CD4-positive, alpha-beta T cell (primary cell): ENCODE measurements at regions of chr10 and their contacts with region 1.

Region 1: DNA sequence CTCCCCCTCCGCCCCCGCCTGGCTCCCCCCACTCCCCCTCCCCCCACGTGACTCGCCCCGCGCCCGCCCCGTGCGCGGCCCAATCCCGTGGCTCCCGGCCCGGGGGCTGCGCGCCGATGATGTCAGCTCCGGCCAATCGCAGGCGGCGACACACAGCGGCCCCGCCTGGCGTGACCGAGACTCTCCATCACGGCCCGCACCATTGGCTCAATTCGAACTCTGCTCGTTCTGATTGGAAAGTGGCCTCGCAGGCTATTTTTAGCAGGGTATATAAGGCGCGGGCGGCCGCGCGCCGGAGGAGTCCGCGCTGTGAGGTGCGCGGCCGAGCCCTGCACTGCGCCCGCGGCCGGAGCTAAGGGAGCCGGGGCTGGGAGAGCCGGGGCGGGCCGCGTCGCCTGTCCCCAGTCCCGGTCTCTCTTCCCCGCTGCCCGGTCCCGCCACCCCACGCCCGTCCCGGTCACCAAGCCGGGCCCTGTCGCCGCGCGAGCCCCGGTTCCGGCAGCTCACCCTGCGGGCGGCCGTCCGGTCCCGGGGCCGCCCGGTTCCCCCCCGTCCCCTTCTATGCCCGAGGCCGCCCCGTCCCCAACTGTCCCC is 345 bp upstream of the KLF6 start:
- DNase-seq: peak; percentile 99 to 100 (median 99)
- ATAC-seq: peak; percentile 71
- H3K4me3 ChIP-seq: peak overlapping the region; percentile 80
- H3K4me3 Mint-ChIP-seq: peak overlapping the region; percentile 98
- H3K27ac ChIP-seq: peak overlapping the region; percentile 99 to 100
- H3K27ac Mint-ChIP-seq: peak overlapping the region; percentile 97
- H3K4me1 ChIP-seq: peaks cover 38% of the 10 kb centered on the region
- H3K4me1 Mint-ChIP-seq: peaks cover 44% of the 10 kb centered on the region
- H3K27me3 ChIP-seq: no peaks in the 10 kb centered on the region
- H3K27me3 Mint-ChIP-seq: no peaks in the 10 kb centered on the region
- CTCF ChIP-seq: no peak

Region 2: DNA sequence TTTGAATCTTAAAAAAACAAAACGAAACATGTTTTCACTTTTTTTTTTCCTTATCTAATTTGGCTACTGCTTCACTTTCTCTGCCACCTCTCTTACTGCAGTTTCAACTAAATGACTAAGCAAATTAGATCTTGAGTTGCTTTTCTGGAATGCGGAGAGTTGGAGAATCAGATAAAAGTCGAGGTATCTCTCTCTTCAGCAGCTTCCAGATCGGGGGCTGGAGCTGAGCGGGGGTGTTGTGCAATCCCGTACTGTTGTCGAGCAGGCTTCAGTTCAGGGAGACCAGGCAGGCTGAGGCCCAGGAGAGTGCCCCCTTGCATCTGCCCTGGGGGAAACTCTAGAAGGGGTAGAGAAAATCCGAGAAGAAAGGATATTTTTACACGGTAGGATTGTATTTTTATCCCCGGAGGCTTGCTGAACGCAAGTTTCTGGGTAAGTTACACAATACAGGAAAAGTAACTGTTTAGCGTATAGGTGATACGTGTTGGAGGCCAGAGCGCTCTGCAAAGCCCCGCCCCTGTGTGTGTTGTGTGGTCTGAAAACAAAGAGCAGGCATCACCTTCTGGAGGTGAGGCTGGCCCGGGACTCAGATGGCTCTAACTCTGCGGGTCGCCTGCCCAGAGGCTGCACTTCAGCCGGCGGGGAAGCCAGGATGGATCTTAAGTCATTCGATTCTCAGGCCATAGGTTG is 116.9 kb before region 1 on chr10:
- CTCF ChIA-PET with region 1: no interaction called
- POLR2A ChIA-PET with region 1: interaction called, 40 read pairs
- intact Hi-C with region 1: no loop called
- DNase-seq: peak; percentile 49 to 89 (median 65)
- ATAC-seq: peak; percentile 90
- H3K4me3 ChIP-seq: peak overlapping the region; percentile 66
- H3K4me3 Mint-ChIP-seq: peak overlapping the region; percentile 89
- H3K27ac ChIP-seq: peak overlapping the region; percentile 65 to 88
- H3K27ac Mint-ChIP-seq: peak overlapping the region; percentile 93
- H3K4me1 ChIP-seq: peaks cover 49% of the 10 kb centered on the region
- H3K4me1 Mint-ChIP-seq: peaks cover 44% of the 10 kb centered on the region
- H3K27me3 ChIP-seq: no peaks in the 10 kb centered on the region
- H3K27me3 Mint-ChIP-seq: no peaks in the 10 kb centered on the region
- CTCF ChIP-seq: no peak

Region 3: GRCh38 chr10:3811291-3811870 is 26.0 kb after region 1 on chr10:
- CTCF ChIA-PET with region 1: interaction called, 10 read pairs
- POLR2A ChIA-PET with region 1: interaction called, 497 read pairs
- intact Hi-C with region 1: no loop called
- DNase-seq: peak in 7 of 14 experiments; percentile 24 to 85 (median 48)
- ATAC-seq: peak; percentile 47
- H3K4me3 ChIP-seq: peak overlapping the region; percentile 35
- H3K4me3 Mint-ChIP-seq: peak overlapping the region; percentile 75
- H3K27ac ChIP-seq: peak overlapping the region; percentile 77 to 93
- H3K27ac Mint-ChIP-seq: no peak overlapping the region
- H3K4me1 ChIP-seq: peaks cover 64% of the 10 kb centered on the region
- H3K4me1 Mint-ChIP-seq: peaks cover 48% of the 10 kb centered on the region
- H3K27me3 ChIP-seq: no peaks in the 10 kb centered on the region
- H3K27me3 Mint-ChIP-seq: no peaks in the 10 kb centered on the region
- CTCF ChIP-seq: no peak

Region 4: DNA sequence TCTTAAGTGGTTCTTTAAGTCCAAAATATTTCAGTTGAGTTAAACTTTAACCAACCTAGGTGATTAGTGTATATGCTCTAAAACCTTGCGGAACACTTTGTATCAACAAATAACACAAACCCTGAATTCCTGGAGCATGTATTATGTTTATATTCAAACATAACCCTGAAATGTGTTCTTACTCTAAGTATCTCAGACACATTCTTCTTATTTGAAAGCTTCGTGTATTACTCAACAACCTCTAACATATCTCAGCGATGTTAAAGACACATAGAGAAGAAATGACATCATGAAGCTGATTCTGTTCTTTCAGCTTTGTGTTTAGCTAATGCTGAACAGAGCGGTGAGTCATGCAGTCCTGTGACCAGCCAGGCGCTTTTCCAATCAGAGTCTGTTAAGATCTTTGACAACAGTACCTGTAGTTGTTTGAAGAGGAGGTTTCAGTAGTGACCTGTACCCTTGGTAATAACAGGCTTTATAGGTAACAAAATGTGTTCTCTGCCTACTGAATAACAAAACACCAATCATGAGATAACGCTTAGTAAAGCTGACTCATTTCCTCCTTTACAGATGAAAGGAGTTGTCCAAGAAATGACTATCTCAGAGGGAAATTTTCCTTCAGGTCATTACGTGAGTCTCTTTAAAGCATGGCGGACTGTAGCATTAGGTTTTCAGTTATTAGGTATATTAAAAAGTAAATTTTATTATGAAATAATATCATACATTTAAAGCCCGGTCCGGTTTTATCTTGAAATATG is 67.0 kb after region 1 on chr10:
- CTCF ChIA-PET with region 1: interaction called, 4 read pairs
- POLR2A ChIA-PET with region 1: interaction called, 41 read pairs
- intact Hi-C with region 1: no loop called
- DNase-seq: peak in 9 of 14 experiments; percentile 46 to 92 (median 59)
- ATAC-seq: peak; percentile 94
- H3K4me3 ChIP-seq: no peak overlapping the region
- H3K4me3 Mint-ChIP-seq: peak overlapping the region; percentile 11
- H3K27ac ChIP-seq: peak overlapping the region in 1 of 2 donors; percentile 80
- H3K27ac Mint-ChIP-seq: peak overlapping the region; percentile 77
- H3K4me1 ChIP-seq: peaks cover 15% of the 10 kb centered on the region
- H3K4me1 Mint-ChIP-seq: peaks cover 23% of the 10 kb centered on the region
- H3K27me3 ChIP-seq: no peaks in the 10 kb centered on the region
- H3K27me3 Mint-ChIP-seq: no peaks in the 10 kb centered on the region
- CTCF ChIP-seq: no peak

Region 5: DNA sequence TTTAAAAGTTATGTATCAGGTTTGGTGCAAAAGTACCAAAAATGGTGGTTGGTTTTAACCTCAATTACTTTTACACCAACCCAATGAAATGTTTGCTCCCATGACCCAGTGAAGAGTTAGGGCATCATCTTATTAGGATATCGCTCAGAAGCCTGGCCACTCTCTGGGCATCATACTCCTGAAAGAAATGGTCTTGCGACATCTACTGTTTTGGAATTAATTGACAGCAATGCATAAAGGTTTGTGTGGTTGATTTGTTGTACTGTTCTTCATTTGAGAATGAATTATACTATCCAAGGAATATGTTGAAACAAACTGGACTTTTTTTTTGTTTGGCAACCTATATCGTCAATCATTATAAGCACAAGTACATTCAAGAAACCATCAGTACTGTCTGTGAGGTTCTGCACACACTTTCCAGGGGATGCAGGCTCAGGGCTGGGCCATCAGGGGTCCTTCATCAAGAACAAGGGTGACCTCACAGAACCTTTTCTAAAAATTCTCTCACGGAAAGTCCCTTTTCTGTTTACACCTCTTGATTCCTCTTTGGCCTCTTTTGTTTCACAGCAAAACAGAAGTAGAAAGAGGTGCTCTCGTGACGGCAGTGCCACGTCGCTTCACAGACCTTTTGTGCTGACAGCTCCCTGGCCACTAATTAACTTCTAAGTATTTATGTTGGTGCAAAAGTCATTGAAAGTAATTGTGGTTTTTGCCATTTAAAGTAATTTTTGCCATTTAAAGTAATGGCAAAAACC is 116.9 kb after region 1 on chr10:
- CTCF ChIA-PET with region 1: no interaction called
- POLR2A ChIA-PET with region 1: interaction called, 83 read pairs
- intact Hi-C with region 1: no loop called
- DNase-seq: peak in 10 of 14 experiments; percentile 7 to 85 (median 24)
- ATAC-seq: peak; percentile 85
- H3K4me3 ChIP-seq: no peak overlapping the region
- H3K4me3 Mint-ChIP-seq: no peak overlapping the region
- H3K27ac ChIP-seq: no peak overlapping the region
- H3K27ac Mint-ChIP-seq: peak overlapping the region; percentile 4
- H3K4me1 ChIP-seq: peaks cover 17% of the 10 kb centered on the region
- H3K4me1 Mint-ChIP-seq: peaks cover 20% of the 10 kb centered on the region
- H3K27me3 ChIP-seq: no peaks in the 10 kb centered on the region
- H3K27me3 Mint-ChIP-seq: no peaks in the 10 kb centered on the region
- CTCF ChIP-seq: no peak

Region 6: GRCh38 chr10:3961082-3961481 is 175.7 kb after region 1 on chr10:
- CTCF ChIA-PET with region 1: no interaction called
- POLR2A ChIA-PET with region 1: interaction called, 17 read pairs
- intact Hi-C with region 1: no loop called
- DNase-seq: peak in 11 of 14 experiments; percentile 19 to 89 (median 37)
- ATAC-seq: peak; percentile 96
- H3K4me3 ChIP-seq: no peak overlapping the region
- H3K4me3 Mint-ChIP-seq: peak overlapping the region; percentile 31
- H3K27ac ChIP-seq: no peak overlapping the region
- H3K27ac Mint-ChIP-seq: peak overlapping the region; percentile 55
- H3K4me1 ChIP-seq: peaks cover 35% of the 10 kb centered on the region
- H3K4me1 Mint-ChIP-seq: peaks cover 21% of the 10 kb centered on the region
- H3K27me3 ChIP-seq: no peaks in the 10 kb centered on the region
- H3K27me3 Mint-ChIP-seq: no peaks in the 10 kb centered on the region
- CTCF ChIP-seq: no peak

Region 7: GRCh38 chr10:4034907-4035598 is 249.7 kb after region 1 on chr10:
- CTCF ChIA-PET with region 1: no interaction called
- POLR2A ChIA-PET with region 1: interaction called, 17 read pairs
- intact Hi-C with region 1: no loop called
- DNase-seq: peak in 5 of 14 experiments; percentile 6 to 57 (median 40)
- ATAC-seq: peak; percentile 77
- H3K4me3 ChIP-seq: peak overlapping the region; percentile 42
- H3K4me3 Mint-ChIP-seq: peak overlapping the region; percentile 86
- H3K27ac ChIP-seq: peak overlapping the region in 1 of 2 donors; percentile 16
- H3K27ac Mint-ChIP-seq: peak overlapping the region; percentile 82
- H3K4me1 ChIP-seq: peaks cover 26% of the 10 kb centered on the region
- H3K4me1 Mint-ChIP-seq: peaks cover 26% of the 10 kb centered on the region
- H3K27me3 ChIP-seq: no peaks in the 10 kb centered on the region
- H3K27me3 Mint-ChIP-seq: no peaks in the 10 kb centered on the region
- CTCF ChIP-seq: no peak